Right cardiac atrium (tissue), 5 donors: ENCODE measurements at regions of chr7 and their contacts with region 1.

Region 1: GRCh38 chr7:38699471-38699870 is 68.3 kb upstream of the AMPH start:
- DNase-seq: no peak
- ATAC-seq: no peak
- H3K4me3 ChIP-seq: no peak overlapping the region
- H3K27ac ChIP-seq: no peak overlapping the region
- H3K4me1 ChIP-seq: no peaks in the 10 kb centered on the region
- H3K27me3 ChIP-seq: no peaks in the 10 kb centered on the region

Region 2: GRCh38 chr7:37770838-37771237 is 928.6 kb before region 1 on chr7:
- intact Hi-C with region 1: loop called in 1 of 4 experiments (anchors 10 kb)
- DNase-seq: no peak
- ATAC-seq: peak in 1 of 2 donors; percentile 70
- H3K4me3 ChIP-seq: no peak overlapping the region
- H3K27ac ChIP-seq: no peak overlapping the region
- H3K4me1 ChIP-seq: no peaks in the 10 kb centered on the region
- H3K27me3 ChIP-seq: no peaks in the 10 kb centered on the region

Region 3: GRCh38 chr7:38542156-38542555 is 157.3 kb before region 1 on chr7:
- intact Hi-C with region 1: no loop called
- DNase-seq: no peak
- ATAC-seq: no peak
- H3K4me3 ChIP-seq: no peak overlapping the region
- H3K27ac ChIP-seq: no peak overlapping the region
- H3K4me1 ChIP-seq: no peaks in the 10 kb centered on the region
- H3K27me3 ChIP-seq: no peaks in the 10 kb centered on the region